ENCODE measurements at regions of chr4 and their contacts with region 1.

Region 1: GRCh38 chr4:39458505-39459300 is at the starts of genes LIAS and RPL9:
- DNase-seq: peak; percentile 99
- ATAC-seq: peak; percentile 89
- H3K4me3 ChIP-seq: peak within 1 kb of the TSS; percentile 94
- H3K27ac ChIP-seq: peak within 1 kb of the TSS; percentile 92
- H3K4me1 ChIP-seq: peaks cover 2% of the 10 kb centered on the region; the same call in 1 of the 2 replicates
- H3K27me3 ChIP-seq: no peaks in the 10 kb centered on the region
- CTCF ChIP-seq: no peak
- EP300 ChIP-seq: 0 out of 4 replicates have a peak, but pooled peaks of 1 of the 2 experiments have one; percentile 22
- POLR2A ChIP-seq: peak; percentile 99
- RAD21 ChIP-seq: no peak
- polyA plus RNA-seq, gene LIAS: 19.9 to 22.1 TPM
- polyA plus RNA-seq, gene RPL9: 3,033 to 4,444 TPM

Region 2: DNA sequence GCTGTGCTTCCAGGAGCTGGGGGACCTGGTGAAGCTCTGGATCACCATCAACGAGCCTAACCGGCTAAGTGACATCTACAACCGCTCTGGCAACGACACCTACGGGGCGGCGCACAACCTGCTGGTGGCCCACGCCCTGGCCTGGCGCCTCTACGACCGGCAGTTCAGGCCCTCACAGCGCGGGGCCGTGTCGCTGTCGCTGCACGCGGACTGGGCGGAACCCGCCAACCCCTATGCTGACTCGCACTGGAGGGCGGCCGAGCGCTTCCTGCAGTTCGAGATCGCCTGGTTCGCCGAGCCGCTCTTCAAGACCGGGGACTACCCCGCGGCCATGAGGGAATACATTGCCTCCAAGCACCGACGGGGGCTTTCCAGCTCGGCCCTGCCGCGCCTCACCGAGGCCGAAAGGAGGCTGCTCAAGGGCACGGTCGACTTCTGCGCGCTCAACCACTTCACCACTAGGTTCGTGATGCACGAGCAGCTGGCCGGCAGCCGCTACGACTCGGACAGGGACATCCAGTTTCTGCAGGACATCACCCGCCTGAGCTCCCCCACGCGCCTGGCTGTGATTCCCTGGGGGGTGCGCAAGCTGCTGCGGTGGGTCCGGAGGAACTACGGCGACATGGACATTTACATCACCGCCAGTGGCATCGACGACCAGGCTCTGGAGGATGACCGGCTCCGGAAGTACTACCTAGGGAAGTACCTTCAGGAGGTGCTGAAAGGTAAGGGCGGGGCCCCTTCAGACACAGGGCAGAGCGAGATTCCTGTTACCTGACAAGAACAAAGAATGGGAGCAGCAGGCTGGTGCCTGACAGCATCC is 11.7 kb before region 1 on chr4:
- CTCF ChIA-PET with region 1: interaction called, 12 read pairs
- POLR2A ChIA-PET with region 1: interaction called, 9 read pairs
- RAD21 ChIA-PET with region 1: no interaction called
- SMC1A ChIA-PET with region 1: interaction called, 6 read pairs
- in situ Hi-C with region 1: no loop called
- intact Hi-C with region 1: no loop called
- DNase-seq: peak; percentile 48
- ATAC-seq: peak; percentile 95
- H3K4me3 ChIP-seq: peak overlapping the region; percentile 18; the same call in 1 of the 2 replicates
- H3K27ac ChIP-seq: no peak overlapping the region
- H3K4me1 ChIP-seq: peaks cover 4% of the 10 kb centered on the region; the same call in 1 of the 2 replicates
- H3K27me3 ChIP-seq: no peaks in the 10 kb centered on the region
- CTCF ChIP-seq: peak; percentile 35 to 52 (median 39); a peak in 4 of 6 replicates
- EP300 ChIP-seq: no peak
- POLR2A ChIP-seq: peak; percentile 68
- RAD21 ChIP-seq: peak; percentile 47

Region 3: DNA sequence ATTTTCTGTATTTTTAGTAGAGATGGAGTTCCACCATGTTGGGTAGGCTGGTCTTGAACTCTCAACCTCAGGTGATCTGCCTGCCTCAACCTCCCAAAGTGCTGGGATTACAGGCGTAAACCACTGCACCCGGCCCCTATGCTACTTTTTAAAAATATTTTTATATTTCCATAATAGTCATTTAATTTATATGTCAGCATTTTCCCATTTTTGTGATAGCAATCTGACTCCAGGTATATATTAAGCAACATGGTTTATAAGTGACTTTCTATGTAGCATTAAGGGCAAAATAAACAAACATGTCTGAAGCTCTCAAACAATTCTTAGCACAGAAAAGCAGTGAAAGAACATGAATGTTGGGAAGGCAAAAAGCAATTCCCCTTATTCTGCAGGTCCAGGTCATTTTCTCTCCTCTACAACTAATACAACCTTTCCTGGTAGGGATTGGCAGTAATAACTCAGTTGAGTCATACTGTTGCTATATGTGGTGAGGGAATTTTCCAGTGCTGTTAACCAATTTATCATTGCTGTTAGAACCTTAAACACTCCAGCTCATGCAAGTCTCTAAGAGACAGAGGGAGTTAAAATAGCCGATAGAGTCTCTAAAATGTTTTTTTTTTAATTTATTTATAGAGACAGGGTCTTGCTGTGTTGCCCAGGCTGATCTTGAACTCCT is 155.9 kb after region 1 on chr4:
- CTCF ChIA-PET with region 1: no interaction called
- POLR2A ChIA-PET with region 1: interaction called, 4 read pairs
- RAD21 ChIA-PET with region 1: no interaction called
- SMC1A ChIA-PET with region 1: no interaction called
- in situ Hi-C with region 1: no loop called
- intact Hi-C with region 1: loop called (anchors 5 kb)
- DNase-seq: no peak
- ATAC-seq: peak; percentile 50
- H3K4me3 ChIP-seq: peak overlapping the region; percentile 48; the same call in 1 of the 2 replicates
- H3K27ac ChIP-seq: peak overlapping the region; percentile 91
- H3K4me1 ChIP-seq: peaks cover 59% of the 10 kb centered on the region
- H3K27me3 ChIP-seq: no peaks in the 10 kb centered on the region
- CTCF ChIP-seq: no peak
- EP300 ChIP-seq: peak; percentile 53 to 70; a peak in 3 of 4 replicates
- POLR2A ChIP-seq: no peak
- RAD21 ChIP-seq: no peak